ENCODE measurements at regions of chr20 and their contacts with region 1.

Region 1: DNA sequence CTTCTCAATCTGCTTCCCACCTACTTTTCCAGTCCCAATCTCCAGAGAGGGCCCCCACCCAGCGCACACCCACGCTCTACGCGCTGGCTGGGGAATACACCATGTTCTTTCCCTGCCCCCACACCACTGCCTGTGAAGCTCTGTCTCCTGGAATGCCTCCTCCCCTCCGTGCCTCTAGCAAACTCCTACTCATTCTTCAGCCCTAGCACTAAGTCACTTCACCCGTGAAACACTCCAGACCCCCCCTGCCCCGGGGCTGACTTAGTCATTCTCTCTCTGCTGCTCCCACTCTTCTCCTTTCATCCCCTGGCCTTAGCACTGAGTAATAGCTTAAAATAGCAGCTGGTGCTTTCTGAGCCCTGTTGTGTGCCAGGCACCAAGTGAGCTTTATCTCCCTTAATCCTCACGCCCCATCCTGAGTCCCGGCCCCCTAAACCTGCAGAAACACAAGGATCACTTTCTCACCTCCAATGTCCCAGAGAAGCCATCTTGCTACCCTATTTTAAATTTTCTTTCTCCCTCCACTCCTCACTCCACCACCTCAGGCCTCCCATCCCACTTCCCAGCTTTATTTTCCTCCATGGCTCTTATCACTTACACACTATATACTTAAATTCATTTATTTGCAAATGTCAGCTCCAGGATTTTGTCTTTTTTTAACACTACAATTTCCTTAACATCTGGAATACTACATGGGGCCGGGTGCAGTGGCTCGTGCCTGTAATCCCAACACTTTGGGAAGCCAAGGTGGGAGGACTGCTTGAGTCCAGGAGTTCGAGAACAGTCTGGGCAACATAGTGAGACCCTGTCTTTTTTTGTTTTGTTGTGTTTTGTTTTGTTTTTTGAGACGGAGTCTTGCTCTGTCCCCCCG is 6.3 kb upstream of the PARD6B start:
- DNase-seq: peak; percentile 96
- H3K4me3 Mint-ChIP-seq: no peak overlapping the region
- H3K27ac Mint-ChIP-seq: no peak overlapping the region
- H3K4me1 Mint-ChIP-seq: peaks cover 22% of the 10 kb centered on the region
- H3K27me3 Mint-ChIP-seq: no peaks in the 10 kb centered on the region
- CTCF ChIP-seq: no peak

Region 2: GRCh38 chr20:50663095-50663850 is 61.8 kb before region 1 on chr20:
- CTCF ChIA-PET with region 1: interaction called, 17 read pairs
- POLR2A ChIA-PET with region 1: interaction called, 104 read pairs
- intact Hi-C with region 1: no loop called
- DNase-seq: peak; percentile 84
- H3K4me3 Mint-ChIP-seq: no peak overlapping the region
- H3K27ac Mint-ChIP-seq: peak overlapping the region; percentile 53
- H3K4me1 Mint-ChIP-seq: peaks cover 21% of the 10 kb centered on the region
- H3K27me3 Mint-ChIP-seq: no peaks in the 10 kb centered on the region
- CTCF ChIP-seq: peak; percentile 60

Region 3: DNA sequence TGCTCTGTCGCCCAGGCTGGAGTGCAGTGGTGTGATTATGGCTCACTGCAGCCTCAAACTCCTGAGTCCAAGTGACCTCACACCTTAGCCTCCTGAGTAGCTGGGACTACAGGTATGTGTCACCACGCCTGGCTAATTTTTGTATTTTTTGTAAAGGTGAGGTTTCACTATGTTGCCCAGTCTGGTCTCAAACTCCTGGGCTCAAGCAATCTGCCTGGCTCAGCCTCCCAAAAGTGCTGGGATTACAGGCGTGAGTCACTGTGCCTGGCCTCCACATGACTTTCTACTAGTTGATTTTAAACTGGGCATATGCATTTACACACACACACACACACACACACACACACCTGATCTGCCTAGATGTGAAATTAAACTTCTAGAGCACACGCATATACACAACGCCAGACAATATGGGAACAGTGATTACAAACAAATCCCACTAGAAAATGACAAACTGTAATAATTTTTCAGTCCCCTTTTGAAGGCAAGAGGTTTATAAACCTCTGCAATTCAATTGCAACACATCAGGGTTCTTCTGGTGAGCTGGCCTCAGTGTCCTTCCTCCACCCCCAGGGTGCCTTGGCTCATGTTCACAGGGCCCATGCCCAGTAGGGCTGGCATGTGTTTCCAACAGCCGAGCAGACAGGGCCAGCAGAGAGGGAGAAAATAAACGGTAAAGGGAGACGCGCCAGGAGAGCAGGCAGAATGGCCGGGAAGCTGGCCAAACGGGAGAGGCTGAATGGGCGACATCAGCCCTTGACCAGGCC is 37.5 kb after region 1 on chr20:
- CTCF ChIA-PET with region 1: interaction called, 5 read pairs
- POLR2A ChIA-PET with region 1: interaction called, 34 read pairs
- intact Hi-C with region 1: no loop called
- DNase-seq: peak; percentile 94
- H3K4me3 Mint-ChIP-seq: peak overlapping the region; percentile 61
- H3K27ac Mint-ChIP-seq: peak overlapping the region; percentile 89
- H3K4me1 Mint-ChIP-seq: peaks cover 27% of the 10 kb centered on the region
- H3K27me3 Mint-ChIP-seq: no peaks in the 10 kb centered on the region
- CTCF ChIP-seq: no peak